Activated B cell treated with CpG ODN at 0.5 μM for 24 hours (primary cell): ENCODE measurements at regions of chr12 and their contacts with region 1.

Region 1: GRCh38 chr12:1634590-1635191 is 5.7 kb downstream of the WNT5B start:
- DNase-seq: peak; percentile 33
- ATAC-seq: peak; percentile 57
- H3K4me3 Mint-ChIP-seq: no peak overlapping the region
- H3K27ac Mint-ChIP-seq: no peak overlapping the region
- H3K4me1 Mint-ChIP-seq: peaks cover 17% of the 10 kb centered on the region
- H3K27me3 Mint-ChIP-seq: peaks cover 26% of the 10 kb centered on the region
- CTCF ChIP-seq: no peak

Region 2: GRCh38 chr12:1117970-1118563 is 516.6 kb before region 1 on chr12:
- CTCF ChIA-PET with region 1: interaction called, 24 read pairs
- POLR2A ChIA-PET with region 1: no interaction called
- intact Hi-C with region 1: loop called (anchors 1 kb)
- DNase-seq: peak; percentile 40
- ATAC-seq: peak; percentile 81
- H3K4me3 Mint-ChIP-seq: no peak overlapping the region
- H3K27ac Mint-ChIP-seq: no peak overlapping the region
- H3K4me1 Mint-ChIP-seq: peaks cover 2% of the 10 kb centered on the region
- H3K27me3 Mint-ChIP-seq: no peaks in the 10 kb centered on the region
- CTCF ChIP-seq: peak; percentile 42

Region 3: DNA sequence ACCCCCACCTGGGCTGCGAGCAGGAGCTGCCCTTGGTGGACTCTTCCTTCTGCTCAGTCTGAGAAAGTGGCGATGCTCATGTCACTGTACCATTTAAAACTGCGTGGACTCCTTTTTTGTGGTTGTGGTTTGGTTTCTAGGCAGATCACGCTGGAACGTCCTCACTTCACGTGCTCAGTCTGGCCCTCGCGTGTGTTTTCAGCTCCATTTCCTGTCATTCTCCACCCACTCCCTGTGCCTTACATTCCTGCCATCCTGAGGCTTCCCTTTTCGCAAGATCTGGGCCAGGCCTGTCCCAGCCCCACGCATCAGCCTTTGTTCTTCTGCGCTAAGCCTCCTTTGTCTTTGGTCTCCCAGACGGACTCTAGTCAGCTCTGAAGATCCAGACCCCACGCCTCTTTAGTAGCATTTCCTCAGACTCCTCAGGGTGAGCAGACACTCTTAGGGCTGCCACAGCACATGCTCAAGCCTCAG is 145.7 kb before region 1 on chr12:
- CTCF ChIA-PET with region 1: no interaction called
- POLR2A ChIA-PET with region 1: interaction called, 12 read pairs
- intact Hi-C with region 1: no loop called
- DNase-seq: no peak
- ATAC-seq: no peak
- H3K4me3 Mint-ChIP-seq: no peak overlapping the region
- H3K27ac Mint-ChIP-seq: peak overlapping the region; percentile 13
- H3K4me1 Mint-ChIP-seq: no peaks in the 10 kb centered on the region
- H3K27me3 Mint-ChIP-seq: no peaks in the 10 kb centered on the region
- CTCF ChIP-seq: no peak

Region 4: GRCh38 chr12:1618489-1618888 is 16.2 kb before region 1 on chr12:
- CTCF ChIA-PET with region 1: interaction called, 5 read pairs
- POLR2A ChIA-PET with region 1: interaction called, 4 read pairs
- intact Hi-C with region 1: loop called (anchors 1 kb)
- DNase-seq: no peak
- ATAC-seq: no peak
- H3K4me3 Mint-ChIP-seq: no peak overlapping the region
- H3K27ac Mint-ChIP-seq: no peak overlapping the region
- H3K4me1 Mint-ChIP-seq: peaks cover 34% of the 10 kb centered on the region
- H3K27me3 Mint-ChIP-seq: peaks cover 5% of the 10 kb centered on the region
- CTCF ChIP-seq: no peak

Region 5: DNA sequence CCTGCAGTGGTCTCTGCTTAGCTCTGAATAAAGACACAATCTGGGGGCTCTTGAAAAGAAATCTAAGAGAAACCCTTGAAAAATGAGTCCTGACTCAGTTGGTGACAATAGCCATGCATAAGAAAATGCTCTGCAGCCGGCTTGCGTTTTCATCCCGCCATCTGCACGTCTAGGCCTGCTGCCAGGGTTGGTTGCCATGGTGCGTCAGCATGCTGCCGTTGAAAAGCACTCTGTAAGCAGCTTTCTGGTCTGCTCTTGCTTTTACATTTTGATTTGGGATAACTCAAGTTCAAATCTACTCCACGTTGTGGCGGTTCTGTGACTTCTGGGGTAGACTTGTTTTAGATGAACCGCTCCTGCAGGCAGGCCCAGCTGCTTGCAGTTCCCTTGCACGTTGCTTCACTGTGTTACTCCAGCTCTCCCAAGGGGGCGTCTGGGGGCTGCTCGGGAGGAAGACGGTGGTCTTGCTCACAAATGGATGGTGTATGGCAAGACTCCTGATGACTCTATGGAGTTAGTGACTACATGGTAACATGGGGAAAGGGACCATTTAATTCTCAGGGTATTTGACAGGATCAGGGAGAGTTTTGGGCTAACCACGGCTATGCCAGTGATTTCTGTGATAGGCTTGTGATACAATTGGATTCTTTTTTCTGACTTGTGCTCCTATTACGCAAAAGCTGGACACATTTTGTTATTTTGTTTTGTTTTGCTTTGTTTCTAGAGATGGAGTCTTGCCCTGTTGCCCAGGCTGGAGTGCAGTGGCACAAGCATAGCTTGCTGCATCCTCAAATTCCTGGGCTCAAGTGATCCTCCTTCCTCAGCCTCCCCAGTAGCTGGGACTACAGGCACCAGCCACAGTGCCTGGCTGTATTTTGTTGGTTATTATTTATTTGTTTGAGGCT is 10.1 kb after region 1 on chr12:
- CTCF ChIA-PET with region 1: interaction called, 18 read pairs
- POLR2A ChIA-PET with region 1: interaction called, 3 read pairs
- intact Hi-C with region 1: no loop called
- DNase-seq: no peak
- ATAC-seq: no peak
- H3K4me3 Mint-ChIP-seq: no peak overlapping the region
- H3K27ac Mint-ChIP-seq: no peak overlapping the region
- H3K4me1 Mint-ChIP-seq: peaks cover 18% of the 10 kb centered on the region
- H3K27me3 Mint-ChIP-seq: peaks cover 5% of the 10 kb centered on the region
- CTCF ChIP-seq: no peak

Region 6: DNA sequence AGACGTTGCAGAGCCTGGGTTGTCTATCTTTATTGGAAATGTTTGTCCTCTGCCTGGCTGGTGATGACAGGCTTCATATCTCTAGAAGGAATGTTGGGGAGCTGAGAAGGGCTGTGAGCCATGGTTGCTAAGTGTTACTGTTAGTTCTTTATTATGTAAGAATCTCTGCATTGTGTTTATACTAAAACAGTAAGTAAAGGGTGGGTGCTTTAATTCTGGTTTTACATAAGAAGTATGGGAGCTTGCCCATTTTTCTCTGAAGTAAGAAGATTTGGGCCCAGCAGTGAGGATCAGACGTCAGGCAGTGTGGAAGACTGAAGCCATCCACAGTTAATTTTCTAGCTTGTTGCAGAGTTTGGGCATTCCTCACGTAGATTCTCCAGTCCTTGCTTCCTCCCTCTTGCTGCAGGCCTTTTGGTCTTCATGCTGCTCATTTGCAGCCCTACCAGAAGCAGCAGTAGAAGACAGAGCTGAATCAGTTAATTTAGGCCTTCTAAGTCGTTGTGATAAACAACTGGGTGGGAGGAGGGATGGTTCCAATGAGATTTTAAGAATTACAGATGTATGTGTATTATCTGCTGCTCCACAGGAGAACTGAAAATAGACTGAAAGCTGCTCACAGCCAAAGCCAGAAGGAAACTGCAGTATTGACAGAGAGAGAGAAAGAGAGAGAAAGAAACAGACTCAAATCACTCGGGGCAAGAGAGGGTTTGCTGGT is 15.7 kb after region 1 on chr12:
- CTCF ChIA-PET with region 1: interaction called, 18 read pairs
- POLR2A ChIA-PET with region 1: interaction called, 4 read pairs
- intact Hi-C with region 1: loop called (anchors 2 kb)
- DNase-seq: no peak
- ATAC-seq: no peak
- H3K4me3 Mint-ChIP-seq: no peak overlapping the region
- H3K27ac Mint-ChIP-seq: no peak overlapping the region
- H3K4me1 Mint-ChIP-seq: peaks cover 18% of the 10 kb centered on the region
- H3K27me3 Mint-ChIP-seq: peaks cover 16% of the 10 kb centered on the region
- CTCF ChIP-seq: no peak